T-cell (primary cell): ENCODE measurements at regions of chr1 and their contacts with region 1.

Region 1: GRCh38 chr1:230310381-230311163 is 115.6 kb downstream of the PGBD5 start:
- DNase-seq: peak in 34 of 35 experiments; percentile 16 to 84 (median 53)
- ATAC-seq: peak; percentile 56 to 72 (median 71)
- H3K4me3 ChIP-seq: no peak overlapping the region
- H3K4me3 Mint-ChIP-seq: no peak overlapping the region
- H3K27ac ChIP-seq: no peak overlapping the region
- H3K27ac Mint-ChIP-seq: no peak overlapping the region
- H3K4me1 ChIP-seq: peaks cover 0 to 4% of the 10 kb centered on the region in 2 experiments
- H3K4me1 Mint-ChIP-seq: peaks cover 5 to 6% (median 6%) of the 10 kb centered on the region in 3 donors
- H3K27me3 ChIP-seq: peaks cover 0 to 19% of the 10 kb centered on the region in 2 experiments
- H3K27me3 Mint-ChIP-seq: peaks cover 3 to 7% of the 10 kb centered on the region in 2 donors

Region 2: DNA sequence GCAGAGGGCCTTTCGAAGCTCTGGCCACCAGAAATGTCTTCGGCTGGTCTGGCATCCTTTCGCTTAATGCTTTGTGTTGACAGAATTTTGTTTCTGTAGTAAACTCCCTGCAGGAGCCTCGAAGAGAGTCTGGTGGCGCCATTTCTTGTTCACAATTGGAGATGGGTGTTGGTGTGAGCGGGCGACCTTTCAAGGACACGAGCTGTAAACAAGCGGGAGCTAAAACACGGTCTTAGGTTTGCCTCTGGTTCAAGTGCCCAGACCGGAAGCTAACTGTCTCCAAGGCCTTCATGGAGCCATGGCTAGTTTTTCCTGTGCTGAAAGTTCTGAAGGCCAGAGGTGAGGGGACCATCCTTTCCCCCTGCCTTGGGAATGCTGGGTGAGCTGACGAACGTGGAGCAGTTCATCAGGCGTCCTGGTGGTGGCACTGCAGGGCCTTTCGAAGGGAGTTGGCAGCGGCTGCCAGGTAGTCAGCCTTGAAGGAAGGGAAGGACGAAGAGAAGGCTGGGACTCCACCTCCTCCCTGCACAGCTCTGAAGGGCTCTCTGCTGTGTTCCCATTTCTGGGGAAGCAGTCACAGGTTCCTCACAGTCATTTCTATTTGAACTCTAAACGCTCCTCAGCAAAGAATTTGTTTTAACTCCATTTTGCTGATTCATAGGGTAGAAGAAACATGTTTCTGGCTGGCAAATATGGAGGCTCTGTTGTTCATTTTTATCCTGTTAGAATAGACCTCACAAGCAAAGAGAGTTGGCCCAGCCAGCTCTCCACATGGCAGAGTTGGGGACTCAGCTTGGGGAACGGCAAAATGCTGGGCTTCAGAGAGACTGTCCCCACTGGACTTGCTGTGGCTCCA is 649.3 kb before region 1 on chr1:
- CTCF ChIA-PET with region 1: interaction called, 7 to 11 read pairs
- POLR2A ChIA-PET with region 1: no interaction called
- DNase-seq: peak; percentile 31 to 78 (median 61)
- ATAC-seq: peak; percentile 75 to 82 (median 78)
- H3K4me3 ChIP-seq: no peak overlapping the region
- H3K4me3 Mint-ChIP-seq: no peak overlapping the region
- H3K27ac ChIP-seq: no peak overlapping the region
- H3K27ac Mint-ChIP-seq: no peak overlapping the region
- H3K4me1 ChIP-seq: peaks cover 0 to 22% of the 10 kb centered on the region in 2 experiments
- H3K4me1 Mint-ChIP-seq: peaks cover 7 to 8% (median 7%) of the 10 kb centered on the region in 3 donors
- H3K27me3 ChIP-seq: no peaks in the 10 kb centered on the region
- H3K27me3 Mint-ChIP-seq: no peaks in the 10 kb centered on the region

Region 3: GRCh38 chr1:229793488-229793887 is 517.1 kb before region 1 on chr1:
- CTCF ChIA-PET with region 1: interaction called in 1 of 2 experiments, 13 read pairs
- POLR2A ChIA-PET with region 1: no interaction called
- DNase-seq: no peak
- ATAC-seq: no peak
- H3K4me3 ChIP-seq: no peak overlapping the region
- H3K4me3 Mint-ChIP-seq: no peak overlapping the region
- H3K27ac ChIP-seq: no peak overlapping the region
- H3K27ac Mint-ChIP-seq: no peak overlapping the region
- H3K4me1 ChIP-seq: no peaks in the 10 kb centered on the region
- H3K4me1 Mint-ChIP-seq: no peaks in the 10 kb centered on the region
- H3K27me3 ChIP-seq: peaks cover 0 to 7% of the 10 kb centered on the region in 2 experiments
- H3K27me3 Mint-ChIP-seq: peaks cover 6 to 18% of the 10 kb centered on the region in 2 donors

Region 4: DNA sequence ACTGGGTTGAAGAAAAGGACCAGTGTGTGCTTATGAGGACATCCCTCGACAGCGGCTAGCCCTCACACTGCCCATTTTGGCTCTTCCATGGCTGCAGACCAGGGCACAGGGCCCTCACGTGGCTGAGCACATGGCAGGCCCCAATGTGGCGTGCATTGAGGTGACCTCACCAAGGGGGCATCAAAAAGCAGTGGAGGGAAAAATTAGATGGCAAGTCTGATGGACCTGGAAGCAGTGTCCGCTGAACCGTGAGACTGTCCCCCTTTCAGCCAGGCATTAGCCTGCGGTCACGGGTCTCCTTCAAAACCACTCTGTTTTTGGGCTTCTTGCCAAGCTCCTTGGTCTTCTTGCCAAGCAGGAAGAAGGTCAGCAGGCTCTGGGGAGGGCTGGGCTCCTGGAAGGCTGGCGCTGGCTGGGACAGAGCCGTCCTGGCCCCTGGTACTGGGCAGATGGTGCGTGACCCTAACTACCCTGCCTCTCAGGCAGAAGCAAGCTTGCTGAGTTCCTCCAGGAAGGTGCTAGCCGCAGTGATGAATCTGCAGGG is 882.1 kb after region 1 on chr1:
- CTCF ChIA-PET with region 1: no interaction called
- POLR2A ChIA-PET with region 1: no interaction called
- DNase-seq: no peak
- ATAC-seq: no peak
- H3K4me3 ChIP-seq: no peak overlapping the region
- H3K4me3 Mint-ChIP-seq: no peak overlapping the region
- H3K27ac ChIP-seq: no peak overlapping the region
- H3K27ac Mint-ChIP-seq: no peak overlapping the region
- H3K4me1 ChIP-seq: no peaks in the 10 kb centered on the region
- H3K4me1 Mint-ChIP-seq: no peaks in the 10 kb centered on the region
- H3K27me3 ChIP-seq: peaks cover 2 to 35% of the 10 kb centered on the region in 2 experiments
- H3K27me3 Mint-ChIP-seq: peaks cover 20 to 35% of the 10 kb centered on the region in 2 donors

Region 5: GRCh38 chr1:231691618-231692259 is 1381.2 kb after region 1 on chr1:
- CTCF ChIA-PET with region 1: no interaction called
- POLR2A ChIA-PET with region 1: no interaction called
- DNase-seq: no peak
- ATAC-seq: no peak
- H3K4me3 ChIP-seq: no peak overlapping the region
- H3K4me3 Mint-ChIP-seq: no peak overlapping the region
- H3K27ac ChIP-seq: no peak overlapping the region
- H3K27ac Mint-ChIP-seq: no peak overlapping the region
- H3K4me1 ChIP-seq: no peaks in the 10 kb centered on the region
- H3K4me1 Mint-ChIP-seq: peaks cover 12 to 37% (median 19%) of the 10 kb centered on the region in 3 donors
- H3K27me3 ChIP-seq: no peaks in the 10 kb centered on the region
- H3K27me3 Mint-ChIP-seq: no peaks in the 10 kb centered on the region